Activated CD4-positive, alpha-beta T cell treated with anti-CD3 and anti-CD28 coated beads for 36 hours (primary cell): ENCODE measurements at regions of chr12 and their contacts with region 1.

Region 1: DNA sequence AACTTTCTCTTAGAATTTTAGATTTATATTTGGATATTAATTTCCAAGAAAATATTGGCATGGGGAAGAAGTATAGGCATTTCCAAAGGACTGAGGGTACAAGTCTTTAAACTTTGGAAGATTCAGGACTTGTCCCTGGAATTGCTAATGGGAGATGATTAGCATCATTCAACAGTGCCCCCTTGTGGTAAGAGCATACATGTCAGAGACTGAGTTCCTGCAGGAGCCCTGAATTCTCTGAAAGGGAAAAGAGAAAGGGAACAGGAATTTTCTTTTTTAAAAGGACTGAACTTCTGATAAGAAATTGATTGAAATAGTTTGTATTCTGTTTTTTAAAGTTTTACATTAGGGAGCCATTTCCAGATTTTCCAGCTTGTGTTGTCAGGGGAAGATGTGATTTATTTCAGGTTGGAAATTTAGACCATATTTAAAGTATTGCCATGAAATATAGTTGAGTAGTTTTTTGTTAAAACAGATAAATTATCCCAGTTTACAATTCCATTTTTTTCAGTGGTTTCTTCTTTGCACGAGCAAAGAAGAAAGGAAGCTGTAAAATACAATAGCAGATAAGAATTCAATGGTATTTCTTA is 44.0 kb upstream of the REP15 start:
- DNase-seq: peak; percentile 37
- ATAC-seq: no peak
- H3K4me3 Mint-ChIP-seq: no peak overlapping the region
- H3K27ac Mint-ChIP-seq: no peak overlapping the region
- H3K4me1 Mint-ChIP-seq: peaks cover 2% of the 10 kb centered on the region
- H3K27me3 Mint-ChIP-seq: no peaks in the 10 kb centered on the region

Region 2: GRCh38 chr12:27332407-27333301 is 319.6 kb before region 1 on chr12 and contains the start of gene BMAL2:
- CTCF ChIA-PET with region 1: interaction called, 3 read pairs
- POLR2A ChIA-PET with region 1: no interaction called
- intact Hi-C with region 1: loop called in 1 of 2 experiments (anchors 1 kb)
- DNase-seq: peak; percentile 66
- ATAC-seq: peak; percentile 28
- H3K4me3 Mint-ChIP-seq: peak within 1 kb of the TSS; percentile 82
- H3K27ac Mint-ChIP-seq: peak within 1 kb of the TSS; percentile 90
- H3K4me1 Mint-ChIP-seq: peaks cover 42% of the 10 kb centered on the region
- H3K27me3 Mint-ChIP-seq: peaks cover 30% of the 10 kb centered on the region
- total RNA-seq, gene BMAL2: 10.9 to 13.2 TPM

Region 3: GRCh38 chr12:27424631-27425230 is 227.5 kb before region 1 on chr12:
- CTCF ChIA-PET with region 1: interaction called, 3 read pairs
- POLR2A ChIA-PET with region 1: no interaction called
- intact Hi-C with region 1: loop called in 1 of 2 experiments (anchors 5 kb)
- DNase-seq: no peak
- ATAC-seq: no peak
- H3K4me3 Mint-ChIP-seq: no peak overlapping the region
- H3K27ac Mint-ChIP-seq: no peak overlapping the region
- H3K4me1 Mint-ChIP-seq: peaks cover 2% of the 10 kb centered on the region
- H3K27me3 Mint-ChIP-seq: no peaks in the 10 kb centered on the region

Region 4: DNA sequence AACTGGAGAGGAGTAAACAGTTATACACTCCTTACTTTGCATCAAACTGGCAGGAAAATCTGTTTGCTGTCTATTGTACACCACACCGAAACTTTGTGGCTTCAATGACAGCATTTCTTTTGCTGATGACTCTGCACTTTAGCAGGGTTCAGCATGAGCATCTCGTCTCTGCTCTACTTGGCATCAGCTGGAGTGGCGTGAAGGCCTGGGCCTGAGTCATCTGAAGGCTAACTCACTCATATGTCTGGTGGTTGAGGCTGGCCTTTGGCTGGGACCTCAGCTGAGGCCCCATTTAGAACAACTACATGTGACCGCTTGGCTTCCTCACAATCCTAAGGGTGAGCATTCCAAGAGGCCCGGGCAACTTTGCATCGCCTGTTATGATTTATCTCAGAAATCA is 15.3 kb after region 1 on chr12:
- CTCF ChIA-PET with region 1: interaction called, 22 read pairs
- POLR2A ChIA-PET with region 1: no interaction called
- intact Hi-C with region 1: no loop called
- DNase-seq: peak; percentile 18
- ATAC-seq: peak; percentile 66
- H3K4me3 Mint-ChIP-seq: no peak overlapping the region
- H3K27ac Mint-ChIP-seq: no peak overlapping the region
- H3K4me1 Mint-ChIP-seq: no peaks in the 10 kb centered on the region
- H3K27me3 Mint-ChIP-seq: no peaks in the 10 kb centered on the region

Region 5: GRCh38 chr12:27703710-27704452 is 51.6 kb after region 1 on chr12:
- CTCF ChIA-PET with region 1: no interaction called
- POLR2A ChIA-PET with region 1: no interaction called
- intact Hi-C with region 1: loop called in 1 of 2 experiments (anchors 2 kb)
- DNase-seq: peak; percentile 87
- ATAC-seq: peak; percentile 98
- H3K4me3 Mint-ChIP-seq: no peak overlapping the region
- H3K27ac Mint-ChIP-seq: no peak overlapping the region
- H3K4me1 Mint-ChIP-seq: no peaks in the 10 kb centered on the region
- H3K27me3 Mint-ChIP-seq: peaks cover 6% of the 10 kb centered on the region